AG04449 (cell line): ENCODE measurements at regions of chr9 and their contacts with region 1.

Region 1: GRCh38 chr9:21812946-21813568 is 10.6 kb downstream of the MTAP start:
- DNase-seq: no peak
- H3K4me3 ChIP-seq: no peak overlapping the region
- CTCF ChIP-seq: peak; percentile 85

Region 2: DNA sequence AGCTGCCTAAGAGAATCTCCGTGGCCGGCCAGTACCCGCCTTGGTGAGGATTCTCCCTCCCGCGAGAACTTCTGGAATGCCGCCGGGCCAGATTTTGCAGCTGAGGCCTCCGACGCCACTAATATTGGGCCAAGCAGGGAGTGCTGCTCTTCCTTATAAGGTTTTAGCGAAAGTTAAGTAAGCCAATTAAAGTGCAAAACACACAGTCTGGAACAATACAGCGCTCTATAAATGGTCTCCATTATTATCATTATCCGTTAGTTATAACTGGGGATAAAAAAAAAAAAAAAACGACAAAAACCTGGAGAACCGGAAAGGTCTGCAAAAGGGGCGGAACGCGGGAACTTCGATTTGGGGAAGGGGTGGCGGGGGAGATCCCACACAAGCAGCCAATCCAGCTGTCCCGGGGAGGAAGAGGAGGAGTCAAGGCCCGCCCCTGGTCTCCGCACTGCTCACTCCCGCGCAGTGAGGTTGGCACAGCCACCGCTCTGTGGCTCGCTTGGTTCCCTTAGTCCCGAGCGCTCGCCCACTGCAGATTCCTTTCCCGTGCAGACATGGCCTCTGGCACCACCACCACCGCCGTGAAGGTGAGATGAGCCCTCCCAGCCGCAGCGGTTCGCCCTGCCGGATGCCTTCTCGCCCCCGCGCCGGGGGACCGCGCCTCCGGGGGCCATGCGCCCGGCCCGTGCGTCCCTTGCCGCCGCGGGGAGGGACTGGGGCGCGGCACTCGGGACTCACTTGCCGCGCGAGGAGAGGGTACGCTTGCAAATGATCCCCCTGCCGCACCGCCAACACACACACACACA is 10.7 kb before region 1 on chr9 and contains the start of gene MTAP:
- CTCF ChIA-PET with region 1: interaction called, 34 read pairs
- POLR2A ChIA-PET with region 1: interaction called, 3 read pairs
- DNase-seq: no peak
- H3K4me3 ChIP-seq: peak within 1 kb of the TSS; percentile 78
- CTCF ChIP-seq: no peak

Region 3: DNA sequence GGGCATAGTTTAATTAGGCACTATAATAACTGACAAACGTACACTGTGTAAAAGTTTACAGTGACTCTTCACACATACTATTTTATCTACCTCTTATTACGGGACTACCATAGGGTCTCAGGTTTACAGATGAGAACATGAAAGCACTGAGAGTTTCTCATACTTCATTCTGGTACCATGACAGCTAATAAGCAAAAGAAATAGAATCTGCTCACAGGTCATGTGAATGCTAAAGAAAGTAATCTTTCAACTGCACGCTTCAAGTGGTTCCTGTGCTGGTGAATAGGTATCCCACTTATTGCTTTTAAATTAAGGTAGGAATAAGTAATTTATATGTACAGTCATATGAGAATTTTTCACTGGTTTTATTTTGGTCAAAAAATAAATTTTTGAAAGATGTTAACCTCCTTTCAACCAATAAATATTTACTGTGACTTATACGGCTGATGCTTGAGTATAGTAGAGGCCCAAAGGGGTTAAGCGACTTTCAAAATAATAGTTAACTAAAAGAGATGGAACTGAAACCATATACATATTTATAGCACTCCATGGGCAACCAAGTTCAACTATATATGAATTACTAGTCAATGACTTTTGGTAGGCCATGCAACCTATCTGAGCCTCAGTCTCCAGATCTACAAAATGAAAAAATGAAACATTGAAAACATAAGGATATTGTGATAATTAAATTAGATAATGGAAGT is 173.1 kb after region 1 on chr9:
- CTCF ChIA-PET with region 1: interaction called, 13 read pairs
- POLR2A ChIA-PET with region 1: no interaction called
- DNase-seq: no peak
- H3K4me3 ChIP-seq: no peak overlapping the region
- CTCF ChIP-seq: no peak

Region 4: GRCh38 chr9:22111954-22112247 is 298.8 kb after region 1 on chr9:
- CTCF ChIA-PET with region 1: interaction called, 70 read pairs
- POLR2A ChIA-PET with region 1: no interaction called
- DNase-seq: no peak
- H3K4me3 ChIP-seq: no peak overlapping the region
- CTCF ChIP-seq: no peak

Region 5: DNA sequence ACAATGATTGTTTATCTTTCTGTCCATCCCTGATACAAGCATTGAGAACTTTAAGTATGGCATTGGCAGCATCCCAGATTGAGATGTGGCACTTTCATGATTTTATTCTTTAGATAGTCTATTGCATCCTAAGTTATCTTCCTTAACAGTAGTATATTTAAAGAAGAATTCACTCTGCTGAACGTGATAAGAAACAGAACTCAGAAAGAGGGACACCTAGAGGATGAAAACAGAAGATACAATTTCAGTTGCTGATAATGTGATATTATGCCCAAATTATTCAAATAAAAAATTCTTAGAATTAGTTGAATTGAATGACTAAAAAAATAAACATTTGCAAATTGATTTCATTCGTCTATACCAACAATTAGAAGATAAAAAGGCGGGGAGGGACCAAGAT is 415.5 kb after region 1 on chr9:
- CTCF ChIA-PET with region 1: interaction called, 24 read pairs
- POLR2A ChIA-PET with region 1: no interaction called
- DNase-seq: no peak
- H3K4me3 ChIP-seq: no peak overlapping the region
- CTCF ChIP-seq: peak; percentile 25

Region 6: GRCh38 chr9:22452415-22453010 is 639.5 kb after region 1 on chr9:
- CTCF ChIA-PET with region 1: interaction called, 60 read pairs
- POLR2A ChIA-PET with region 1: no interaction called
- DNase-seq: no peak
- H3K4me3 ChIP-seq: no peak overlapping the region
- CTCF ChIP-seq: peak; percentile 48